K562 (cell line): ENCODE measurements at regions of chr18 and their contacts with region 1.

Region 1: GRCh38 chr18:3245853-3246634 is 1.6 kb upstream of the MYL12A start:
- DNase-seq: peak; percentile 73 to 97 (median 79)
- ATAC-seq: peak; percentile 76
- H3K4me3 ChIP-seq: peak overlapping the region; percentile 92
- H3K27ac ChIP-seq: peak overlapping the region; percentile 100
- H3K4me1 ChIP-seq: peaks cover 3 to 11% of the 10 kb centered on the region in 2 experiments; a peak in 3 of 5 replicates
- H3K27me3 ChIP-seq: no peaks in the 10 kb centered on the region
- CTCF ChIP-seq: peak; percentile 96 to 99 (median 99)
- EP300 ChIP-seq: peak; percentile 60; the same call in 1 of the 2 replicates
- POLR2A ChIP-seq: no peak
- RAD21 ChIP-seq: peak; percentile 99 to 100

Region 2: GRCh38 chr18:2589345-2590068 is 656.5 kb before region 1 on chr18:
- CTCF ChIA-PET with region 1: no interaction called
- POLR2A ChIA-PET with region 1: no interaction called
- in situ Hi-C with region 1: no loop called
- intact Hi-C with region 1: no loop called
- DNase-seq: no peak
- ATAC-seq: peak; percentile 46; the same call in 2 of the 3 replicates
- H3K4me3 ChIP-seq: no peak overlapping the region
- H3K27ac ChIP-seq: no peak overlapping the region
- H3K4me1 ChIP-seq: no peaks in the 10 kb centered on the region
- H3K27me3 ChIP-seq: no peaks in the 10 kb centered on the region
- CTCF ChIP-seq: no peak
- EP300 ChIP-seq: no peak
- POLR2A ChIP-seq: no peak
- RAD21 ChIP-seq: no peak

Region 3: DNA sequence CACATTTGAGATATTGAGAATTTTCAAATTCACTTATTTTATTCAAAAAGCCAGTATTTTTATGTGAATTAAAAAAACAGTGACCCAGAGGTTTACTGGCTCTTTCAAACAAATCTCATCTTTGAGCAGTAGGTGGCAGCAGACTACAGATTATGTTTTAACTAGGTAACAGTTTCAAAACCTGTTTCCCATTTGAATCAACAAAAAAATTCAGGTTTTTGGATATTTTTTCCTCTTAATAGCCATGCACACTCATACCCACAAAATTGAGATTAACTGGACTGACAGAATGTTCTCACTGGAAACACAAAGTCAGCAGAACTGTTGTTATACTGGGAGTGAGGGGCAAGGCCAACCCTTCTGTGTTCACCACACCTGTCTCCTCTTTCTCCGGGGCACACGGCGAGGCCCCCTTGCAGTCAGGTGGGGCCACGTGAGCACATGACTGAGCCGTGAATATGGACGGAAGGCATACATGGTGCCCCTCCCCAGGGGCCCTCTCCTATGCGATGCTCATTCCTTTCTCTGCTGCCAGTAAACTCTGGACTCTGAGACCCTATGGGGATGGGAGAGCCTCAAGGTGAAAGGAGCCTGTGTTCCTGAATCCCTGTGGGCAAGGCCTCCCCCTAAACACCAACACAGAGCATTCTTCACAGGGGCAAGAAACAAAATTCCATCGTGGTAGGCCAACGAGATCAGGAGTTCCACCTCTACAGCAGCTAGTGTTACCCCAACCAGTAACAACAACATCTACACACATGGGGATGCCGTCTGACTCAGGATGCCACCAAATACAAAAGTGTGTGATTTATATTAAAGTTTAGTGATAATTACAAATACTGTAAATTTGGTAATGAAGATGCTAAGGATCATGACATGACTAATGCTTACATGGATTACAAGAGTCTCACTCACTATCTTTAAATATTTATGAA is 313.5 kb before region 1 on chr18:
- CTCF ChIA-PET with region 1: interaction called, 64 read pairs
- POLR2A ChIA-PET with region 1: interaction called, 10 read pairs
- in situ Hi-C with region 1: no loop called
- intact Hi-C with region 1: loop called (anchors 1 kb)
- DNase-seq: peak; percentile 59 to 77 (median 66)
- ATAC-seq: peak; percentile 85
- H3K4me3 ChIP-seq: no peak overlapping the region
- H3K27ac ChIP-seq: no peak overlapping the region
- H3K4me1 ChIP-seq: no peaks in the 10 kb centered on the region
- H3K27me3 ChIP-seq: no peaks in the 10 kb centered on the region
- CTCF ChIP-seq: peak; percentile 58 to 94 (median 64); a peak in 5 of 6 replicates
- EP300 ChIP-seq: no peak
- POLR2A ChIP-seq: no peak; the same call in 1 of the 2 replicates
- RAD21 ChIP-seq: peak; percentile 92 to 93

Region 4: GRCh38 chr18:2994603-2995432 is 251.2 kb before region 1 on chr18:
- CTCF ChIA-PET with region 1: interaction called, 3 read pairs
- POLR2A ChIA-PET with region 1: interaction called, 35 read pairs
- in situ Hi-C with region 1: no loop called
- intact Hi-C with region 1: loop called (anchors 1 kb)
- DNase-seq: peak; percentile 90 to 92 (median 91)
- ATAC-seq: peak; percentile 92
- H3K4me3 ChIP-seq: no peak overlapping the region
- H3K27ac ChIP-seq: peak overlapping the region; percentile 74
- H3K4me1 ChIP-seq: peaks cover 14 to 40% of the 10 kb centered on the region in 2 experiments
- H3K27me3 ChIP-seq: no peaks in the 10 kb centered on the region
- CTCF ChIP-seq: peak; percentile 76 to 95 (median 93)
- EP300 ChIP-seq: peak; percentile 61
- POLR2A ChIP-seq: no peak
- RAD21 ChIP-seq: peak; percentile 82 to 87

Region 5: DNA sequence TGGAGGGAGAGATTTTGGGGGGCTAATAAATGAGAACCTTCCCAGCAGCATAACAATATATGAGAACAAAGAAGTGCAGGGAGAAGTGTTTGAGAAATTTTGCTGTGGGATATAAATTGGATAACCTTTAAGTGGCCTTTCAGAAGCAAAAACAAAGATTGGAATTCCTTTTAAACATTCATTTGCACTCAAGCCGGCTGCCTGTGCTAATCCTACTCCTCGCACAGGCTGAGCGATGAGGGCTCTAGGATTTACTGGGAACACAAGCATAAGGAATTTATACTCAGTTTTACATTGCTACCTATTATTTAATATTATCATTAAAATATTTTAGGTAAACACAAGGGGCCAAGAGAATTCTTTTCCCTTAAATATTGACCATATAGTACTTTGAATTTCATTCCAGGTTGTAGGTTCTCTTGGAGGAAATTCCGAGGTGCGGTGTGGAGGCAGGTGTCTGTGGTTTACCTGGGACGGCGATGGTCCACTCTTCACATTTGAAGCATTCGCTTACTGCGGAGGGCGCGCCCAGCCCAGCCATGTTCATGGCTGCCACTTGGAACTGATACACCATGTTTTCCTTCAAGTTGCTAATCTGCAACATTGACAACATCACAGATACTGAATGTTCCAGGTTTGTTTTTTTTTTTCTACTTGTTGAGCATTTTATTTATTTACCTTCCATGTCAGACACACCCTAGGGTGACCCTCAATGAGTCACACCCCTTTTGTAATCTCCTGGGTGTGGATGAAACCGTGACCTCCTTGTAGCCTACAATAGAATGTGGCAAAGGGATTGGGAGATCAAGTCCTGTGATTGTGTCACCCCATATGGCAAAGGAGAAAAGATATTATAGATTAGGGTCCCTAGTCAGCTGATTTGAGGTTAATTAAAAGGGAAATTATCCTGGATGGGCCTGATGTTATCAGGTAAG is 126.4 kb before region 1 on chr18:
- CTCF ChIA-PET with region 1: no interaction called
- POLR2A ChIA-PET with region 1: interaction called, 3 read pairs
- in situ Hi-C with region 1: no loop called
- intact Hi-C with region 1: loop called (anchors 2 kb)
- DNase-seq: peak in 1 of 4 experiments; percentile 31
- ATAC-seq: peak; percentile 43; the same call in 1 of the 3 replicates
- H3K4me3 ChIP-seq: no peak overlapping the region
- H3K27ac ChIP-seq: no peak overlapping the region
- H3K4me1 ChIP-seq: peaks cover 4 to 10% of the 10 kb centered on the region in 2 experiments; a peak in 3 of 5 replicates
- H3K27me3 ChIP-seq: no peaks in the 10 kb centered on the region; a peak in 1 of 5 replicates
- CTCF ChIP-seq: no peak
- EP300 ChIP-seq: no peak
- POLR2A ChIP-seq: no peak
- RAD21 ChIP-seq: no peak

Region 6: GRCh38 chr18:3171631-3172030 is 74.4 kb before region 1 on chr18:
- CTCF ChIA-PET with region 1: no interaction called
- POLR2A ChIA-PET with region 1: no interaction called
- in situ Hi-C with region 1: no loop called
- intact Hi-C with region 1: loop called (anchors 5 kb)
- DNase-seq: no peak
- ATAC-seq: no peak
- H3K4me3 ChIP-seq: no peak overlapping the region
- H3K27ac ChIP-seq: no peak overlapping the region
- H3K4me1 ChIP-seq: peaks cover 3 to 4% of the 10 kb centered on the region in 2 experiments; a peak in 3 of 5 replicates
- H3K27me3 ChIP-seq: no peaks in the 10 kb centered on the region
- CTCF ChIP-seq: no peak
- EP300 ChIP-seq: no peak
- POLR2A ChIP-seq: no peak
- RAD21 ChIP-seq: no peak

Region 7: GRCh38 chr18:3230401-3231334 is 15.4 kb before region 1 on chr18:
- CTCF ChIA-PET with region 1: no interaction called
- POLR2A ChIA-PET with region 1: interaction called, 35 read pairs
- in situ Hi-C with region 1: no loop called
- intact Hi-C with region 1: no loop called
- DNase-seq: peak; percentile 37 to 75 (median 46)
- ATAC-seq: peak; percentile 93
- H3K4me3 ChIP-seq: no peak overlapping the region
- H3K27ac ChIP-seq: no peak overlapping the region
- H3K4me1 ChIP-seq: no peaks in the 10 kb centered on the region; a peak in 1 of 5 replicates
- H3K27me3 ChIP-seq: no peaks in the 10 kb centered on the region
- CTCF ChIP-seq: no peak
- EP300 ChIP-seq: no peak
- POLR2A ChIP-seq: no peak
- RAD21 ChIP-seq: no peak

Region 8: DNA sequence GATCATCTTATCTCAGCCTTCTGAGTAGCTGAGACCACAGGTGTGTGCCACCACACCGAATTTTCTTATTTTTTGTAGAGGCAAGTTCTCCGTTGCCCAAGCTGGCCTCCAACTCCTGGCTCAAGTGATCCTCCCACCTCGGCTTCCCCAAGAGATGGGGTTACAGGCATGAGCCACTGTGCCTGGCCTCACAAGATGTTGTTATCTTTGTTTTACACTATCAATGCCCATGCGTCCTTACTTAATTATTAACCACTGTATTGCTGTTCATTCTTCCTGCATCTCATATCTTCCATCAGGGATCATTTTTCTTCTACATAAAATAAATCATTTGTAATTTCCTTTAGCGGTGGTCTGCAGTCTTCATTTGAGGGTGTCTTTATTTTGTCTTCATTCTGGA is 385.8 kb after region 1 on chr18:
- CTCF ChIA-PET with region 1: no interaction called
- POLR2A ChIA-PET with region 1: no interaction called
- in situ Hi-C with region 1: no loop called
- intact Hi-C with region 1: no loop called
- DNase-seq: no peak
- ATAC-seq: no peak; the same call in 2 of the 3 replicates
- H3K4me3 ChIP-seq: no peak overlapping the region
- H3K27ac ChIP-seq: no peak overlapping the region
- H3K4me1 ChIP-seq: peaks cover 14 to 19% of the 10 kb centered on the region in 2 experiments
- H3K27me3 ChIP-seq: no peaks in the 10 kb centered on the region
- CTCF ChIP-seq: no peak
- EP300 ChIP-seq: no peak
- POLR2A ChIP-seq: no peak
- RAD21 ChIP-seq: no peak

Region 9: GRCh38 chr18:3966985-3967856 is 721.2 kb after region 1 on chr18:
- CTCF ChIA-PET with region 1: no interaction called
- POLR2A ChIA-PET with region 1: no interaction called
- in situ Hi-C with region 1: no loop called
- intact Hi-C with region 1: no loop called
- DNase-seq: no peak
- ATAC-seq: no peak
- H3K4me3 ChIP-seq: no peak overlapping the region
- H3K27ac ChIP-seq: no peak overlapping the region
- H3K4me1 ChIP-seq: no peaks in the 10 kb centered on the region
- H3K27me3 ChIP-seq: no peaks in the 10 kb centered on the region
- CTCF ChIP-seq: no peak
- EP300 ChIP-seq: no peak
- POLR2A ChIP-seq: no peak
- RAD21 ChIP-seq: no peak